Body of pancreas (tissue), 4 donors: ENCODE measurements at regions of chr20 and their contacts with region 1.

Region 1: DNA sequence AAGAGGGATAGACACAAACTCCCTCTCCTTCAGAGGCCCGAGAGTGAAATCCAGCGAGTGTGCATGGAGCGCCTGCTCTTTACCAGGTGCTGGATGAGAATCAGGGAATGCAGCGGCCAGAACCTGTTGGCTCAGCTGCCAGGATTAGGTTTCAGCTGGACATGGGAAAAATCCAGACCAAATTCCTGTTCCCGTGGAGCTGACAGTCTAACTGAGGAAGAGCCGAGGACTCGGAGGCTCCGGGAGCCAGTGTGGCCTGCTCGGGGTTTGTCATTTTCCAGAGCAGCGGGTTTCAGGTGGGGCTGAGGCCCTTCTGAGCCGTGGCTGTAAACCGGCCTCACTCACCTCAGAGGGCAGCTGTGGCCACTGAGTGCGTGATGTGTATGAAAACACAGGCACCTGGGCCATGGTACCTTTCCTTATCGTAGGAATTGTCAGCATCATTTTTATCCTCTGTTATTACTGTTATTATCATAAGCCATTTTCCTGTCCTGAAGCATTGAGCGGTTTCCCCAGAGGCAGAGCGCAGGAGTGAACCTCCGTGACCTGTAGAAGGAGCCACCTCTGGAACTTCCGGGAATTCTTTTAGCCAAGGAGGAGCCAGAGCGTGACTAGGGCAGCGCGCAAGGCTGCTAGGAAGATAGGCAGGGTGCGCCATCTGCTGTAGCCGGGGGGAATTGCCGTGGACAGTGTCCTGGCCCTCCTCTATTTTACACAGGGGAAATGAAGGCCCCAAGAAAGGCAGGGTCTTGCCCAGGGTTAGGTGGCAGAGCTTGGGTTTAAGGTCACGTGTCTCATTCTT is 27.3 kb downstream of the PKIG start:
- DNase-seq: peak; percentile 92 to 95 (median 93)
- ATAC-seq: peak; percentile 98
- H3K4me3 ChIP-seq: no peak overlapping the region
- H3K27ac ChIP-seq: peak overlapping the region; percentile 79 to 88 (median 82)
- H3K4me1 ChIP-seq: peaks cover 10% of the 10 kb centered on the region
- H3K27me3 ChIP-seq: no peaks in the 10 kb centered on the region
- CTCF ChIP-seq: peak; percentile 93 to 99 (median 98)
- POLR2A ChIP-seq: peak in 2 of 3 donors; percentile 52 to 73

Region 2: GRCh38 chr20:44109951-44110361 is 499.8 kb before region 1 on chr20:
- intact Hi-C with region 1: loop called (anchors 10 kb)
- DNase-seq: no peak
- ATAC-seq: no peak
- H3K4me3 ChIP-seq: no peak overlapping the region
- H3K27ac ChIP-seq: no peak overlapping the region
- H3K4me1 ChIP-seq: no peaks in the 10 kb centered on the region
- H3K27me3 ChIP-seq: no peaks in the 10 kb centered on the region
- CTCF ChIP-seq: no peak
- POLR2A ChIP-seq: no peak

Region 3: GRCh38 chr20:44222633-44223368 is 386.9 kb before region 1 on chr20:
- intact Hi-C with region 1: loop called (anchors 10 kb)
- DNase-seq: no peak
- ATAC-seq: no peak
- H3K4me3 ChIP-seq: no peak overlapping the region
- H3K27ac ChIP-seq: no peak overlapping the region
- H3K4me1 ChIP-seq: peaks cover 15% of the 10 kb centered on the region
- H3K27me3 ChIP-seq: no peaks in the 10 kb centered on the region
- CTCF ChIP-seq: no peak
- POLR2A ChIP-seq: no peak

Region 4: DNA sequence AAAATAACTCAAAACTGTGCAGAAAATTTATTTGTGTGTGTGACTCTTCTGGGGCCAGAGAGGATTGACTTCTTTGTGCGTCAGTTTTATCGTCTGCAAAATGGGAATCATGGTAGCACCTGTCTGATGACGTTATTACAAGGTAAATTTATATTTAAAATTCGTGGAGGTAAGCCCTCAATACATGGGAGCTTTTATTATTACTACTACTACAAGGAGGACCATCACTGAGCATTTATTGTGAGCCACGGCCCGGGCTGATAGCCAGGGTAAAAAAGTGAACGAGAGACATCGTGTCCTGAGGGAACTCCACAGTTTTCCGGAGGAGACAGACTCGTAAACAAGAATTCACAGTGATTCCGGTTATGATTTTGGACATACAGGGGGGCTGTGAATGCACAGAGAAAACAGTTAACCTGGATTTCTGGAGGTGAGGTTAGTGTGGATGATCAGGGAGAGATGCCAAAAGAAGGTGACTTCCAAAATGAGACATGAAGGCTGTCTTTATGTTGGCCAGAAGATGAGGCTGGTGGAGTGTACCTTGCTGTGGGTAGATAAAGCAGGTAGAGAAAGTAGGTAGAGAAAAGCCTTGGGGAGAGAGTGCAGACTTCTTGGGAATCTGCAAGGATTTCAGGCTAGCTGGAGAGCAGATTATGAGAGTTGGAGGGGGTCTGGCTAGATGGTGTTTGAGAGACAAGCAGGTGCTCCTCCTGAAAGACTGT is 77.3 kb before region 1 on chr20:
- intact Hi-C with region 1: loop called (anchors 10 kb)
- DNase-seq: peak in 1 of 4 donors; percentile 37
- ATAC-seq: peak; percentile 16
- H3K4me3 ChIP-seq: peak overlapping the region; percentile 70 to 89
- H3K27ac ChIP-seq: peak overlapping the region in 3 of 4 donors; percentile 70 to 79 (median 75)
- H3K4me1 ChIP-seq: peaks cover 14% of the 10 kb centered on the region
- H3K27me3 ChIP-seq: no peaks in the 10 kb centered on the region
- CTCF ChIP-seq: no peak
- POLR2A ChIP-seq: no peak

Region 5: DNA sequence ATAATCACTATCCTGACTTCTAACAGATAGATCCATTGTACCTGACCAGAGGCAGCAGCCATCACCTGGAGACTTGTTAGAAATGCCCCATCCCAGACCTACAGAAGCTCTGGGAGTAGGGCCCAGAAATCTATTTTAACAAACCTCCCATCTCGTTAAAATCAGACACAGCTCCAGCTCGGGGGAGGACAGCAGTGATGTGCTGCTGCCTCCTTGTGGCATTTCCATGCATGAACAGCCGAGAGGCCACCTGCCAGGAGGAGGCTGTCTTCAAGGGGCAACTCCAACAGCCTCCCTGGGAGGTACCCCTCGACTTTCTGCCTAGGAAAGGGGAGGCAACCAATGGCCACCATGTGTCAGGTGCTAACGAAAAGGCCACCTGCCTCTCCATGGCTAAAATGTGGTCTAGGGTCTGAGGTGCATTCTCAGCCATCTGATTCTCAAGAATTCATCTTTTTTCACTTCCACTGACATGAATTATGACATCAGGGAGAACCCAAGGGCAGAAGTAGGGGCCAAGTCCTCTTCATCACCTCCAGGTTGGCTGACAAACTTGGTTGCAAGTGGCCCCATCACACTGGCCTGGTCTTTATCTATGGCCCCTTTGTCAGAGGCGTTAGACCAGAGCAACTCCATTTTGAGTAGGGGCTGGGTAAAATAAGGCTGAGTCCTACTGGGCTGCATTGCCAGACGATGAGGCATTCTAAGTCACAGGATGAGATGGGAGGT is 123.8 kb after region 1 on chr20:
- intact Hi-C with region 1: no loop called
- DNase-seq: peak; percentile 64 to 70 (median 66)
- ATAC-seq: peak; percentile 41
- H3K4me3 ChIP-seq: no peak overlapping the region
- H3K27ac ChIP-seq: no peak overlapping the region
- H3K4me1 ChIP-seq: no peaks in the 10 kb centered on the region
- H3K27me3 ChIP-seq: no peaks in the 10 kb centered on the region
- CTCF ChIP-seq: peak; percentile 55 to 78 (median 73)
- POLR2A ChIP-seq: no peak

Region 6: GRCh38 chr20:44942264-44942973 is 332.7 kb after region 1 on chr20:
- intact Hi-C with region 1: no loop called
- DNase-seq: no peak
- ATAC-seq: no peak
- H3K4me3 ChIP-seq: no peak overlapping the region
- H3K27ac ChIP-seq: no peak overlapping the region
- H3K4me1 ChIP-seq: peaks cover 4% of the 10 kb centered on the region
- H3K27me3 ChIP-seq: no peaks in the 10 kb centered on the region
- CTCF ChIP-seq: no peak
- POLR2A ChIP-seq: no peak

Region 7: GRCh38 chr20:45218133-45218532 is 608.4 kb after region 1 on chr20:
- intact Hi-C with region 1: no loop called
- DNase-seq: no peak
- ATAC-seq: no peak
- H3K4me3 ChIP-seq: no peak overlapping the region
- H3K27ac ChIP-seq: no peak overlapping the region
- H3K4me1 ChIP-seq: no peaks in the 10 kb centered on the region
- H3K27me3 ChIP-seq: no peaks in the 10 kb centered on the region
- CTCF ChIP-seq: no peak
- POLR2A ChIP-seq: no peak